Sciatic nerve (tissue), 2 donors: ENCODE measurements at regions of chr5 and their contacts with region 1.

Region 1: GRCh38 chr5:14644623-14645237 is 19.8 kb upstream of the OTULIN start:
- DNase-seq: no peak
- ATAC-seq: no peak

Region 2: GRCh38 chr5:14357851-14358250 is 286.9 kb before region 1 on chr5:
- intact Hi-C with region 1: loop called (anchors 5 kb)
- DNase-seq: no peak
- ATAC-seq: peak; percentile 32

Region 3: DNA sequence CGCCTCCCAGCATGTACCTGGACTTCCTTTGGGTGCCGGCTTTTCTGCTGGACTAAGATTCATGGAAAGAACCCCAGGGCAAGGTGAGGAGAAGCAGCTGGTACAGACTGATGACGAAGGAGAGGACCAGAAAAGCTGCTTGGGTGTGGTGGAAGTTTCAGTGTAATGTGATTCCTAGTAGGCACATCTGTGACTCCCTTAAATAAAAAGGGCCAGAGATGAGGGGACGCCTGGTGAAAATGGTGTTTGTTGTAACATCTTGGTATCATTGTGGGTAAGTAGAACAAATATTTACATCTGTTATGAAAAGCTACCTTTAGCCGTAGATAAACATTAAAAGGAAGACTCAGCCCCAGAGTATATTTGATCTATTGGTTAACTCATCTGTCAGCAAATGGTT is 29.4 kb before region 1 on chr5:
- intact Hi-C with region 1: no loop called
- DNase-seq: no peak
- ATAC-seq: no peak

Region 4: GRCh38 chr5:14801792-14802191 is 157.1 kb after region 1 on chr5:
- intact Hi-C with region 1: no loop called
- DNase-seq: no peak
- ATAC-seq: no peak